Tibial artery (tissue), 4 donors: ENCODE measurements at regions of chr2 and their contacts with region 1.

Region 1: GRCh38 chr2:127526149-127527000 is at the start of gene IWS1:
- DNase-seq: peak; percentile 97
- H3K4me3 ChIP-seq: peak within 1 kb of the TSS; percentile 77 to 84
- H3K27ac ChIP-seq: peak within 1 kb of the TSS; percentile 91
- H3K4me1 ChIP-seq: peaks cover 0 to 23% (median 20%) of the 10 kb centered on the region in 4 donors
- H3K27me3 ChIP-seq: no peaks in the 10 kb centered on the region
- CTCF ChIP-seq: peak; percentile 48 to 73

Region 2: GRCh38 chr2:127471286-127471988 is 54.9 kb before region 1 on chr2:
- intact Hi-C with region 1: no loop called
- DNase-seq: no peak
- H3K4me3 ChIP-seq: no peak overlapping the region
- H3K27ac ChIP-seq: no peak overlapping the region
- H3K4me1 ChIP-seq: no peaks in the 10 kb centered on the region
- H3K27me3 ChIP-seq: no peaks in the 10 kb centered on the region
- CTCF ChIP-seq: no peak

Region 3: DNA sequence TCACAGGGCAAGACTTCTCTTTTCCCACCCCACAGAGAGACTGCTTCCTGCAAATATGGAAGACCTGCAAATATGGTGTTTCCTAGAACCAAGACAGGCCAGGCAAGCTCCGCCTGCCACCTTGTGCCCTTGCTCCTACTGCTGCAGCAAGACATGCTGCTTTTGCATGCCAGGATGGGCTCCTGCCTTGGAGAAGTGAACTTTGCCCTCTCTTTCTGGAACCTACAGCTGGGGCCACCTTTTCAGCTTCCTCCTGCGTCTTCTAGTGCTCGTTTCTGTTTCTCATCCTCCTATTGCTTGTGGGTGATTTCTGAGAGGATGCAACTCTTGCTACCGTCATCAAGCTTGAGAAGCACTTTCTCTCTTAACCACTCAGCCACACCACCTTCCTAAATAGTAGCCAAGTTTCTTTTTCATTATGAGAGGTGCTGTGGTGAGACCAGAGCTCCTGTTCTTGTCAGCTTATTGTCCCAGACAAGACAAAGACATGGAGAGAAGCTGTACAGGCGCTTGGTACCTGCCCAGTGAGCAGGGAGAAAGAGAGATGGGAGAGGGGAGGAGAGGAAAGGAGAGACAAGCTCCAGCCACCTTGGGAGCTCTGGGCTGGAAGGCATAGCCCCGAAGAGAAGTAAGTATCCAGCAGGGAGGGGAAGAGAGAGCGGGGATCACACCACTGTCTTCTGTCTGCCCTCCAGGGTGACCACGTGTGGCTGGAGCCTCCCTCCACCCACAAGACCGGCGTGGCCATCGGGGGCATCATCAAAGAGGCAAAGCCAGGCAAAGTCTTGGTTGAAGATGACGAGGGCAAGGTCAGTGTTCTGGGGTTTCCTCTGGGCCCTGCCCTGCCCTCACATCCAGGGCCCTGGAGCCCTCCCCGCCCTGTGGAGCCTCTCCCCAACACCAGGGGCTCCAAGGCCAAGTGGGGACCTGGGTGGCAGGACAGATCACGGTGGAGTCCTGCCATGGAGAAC is 37.4 kb after region 1 on chr2:
- intact Hi-C with region 1: no loop called
- DNase-seq: no peak
- H3K4me3 ChIP-seq: no peak overlapping the region
- H3K27ac ChIP-seq: no peak overlapping the region
- H3K4me1 ChIP-seq: peaks cover 0 to 27% (median 10%) of the 10 kb centered on the region in 4 donors
- H3K27me3 ChIP-seq: no peaks in the 10 kb centered on the region
- CTCF ChIP-seq: no peak

Region 4: DNA sequence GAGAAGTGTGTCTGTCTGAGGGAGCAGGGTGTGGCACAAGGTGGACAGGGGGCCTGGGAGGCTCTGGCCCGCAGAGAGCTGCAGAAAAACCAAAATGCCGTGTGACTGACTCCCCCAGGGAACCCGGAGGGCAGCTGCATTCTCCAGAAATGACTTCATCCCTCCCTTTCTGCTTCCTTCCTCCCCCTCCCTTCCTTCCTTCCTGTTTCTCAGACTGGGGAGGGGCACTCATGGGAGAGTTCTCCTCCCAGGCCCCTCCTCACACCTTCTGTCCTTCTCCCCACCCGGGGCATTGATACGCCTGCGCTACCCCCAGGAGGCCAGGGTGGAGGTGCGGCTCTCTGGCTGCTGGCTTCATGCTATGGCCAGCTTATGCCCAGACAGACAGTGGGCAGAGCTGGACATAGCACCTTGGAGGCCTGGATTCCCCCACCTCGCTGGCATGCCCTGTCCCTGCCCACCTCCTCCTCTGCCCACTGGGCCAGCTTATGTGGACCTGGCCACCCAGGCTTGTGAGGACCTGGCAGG is 111.4 kb after region 1 on chr2:
- intact Hi-C with region 1: loop called (anchors 5 kb)
- DNase-seq: no peak
- H3K4me3 ChIP-seq: no peak overlapping the region
- H3K27ac ChIP-seq: peak overlapping the region; percentile 72 to 81
- H3K4me1 ChIP-seq: peaks cover 0 to 48% (median 38%) of the 10 kb centered on the region in 4 donors
- H3K27me3 ChIP-seq: no peaks in the 10 kb centered on the region
- CTCF ChIP-seq: no peak

Region 5: DNA sequence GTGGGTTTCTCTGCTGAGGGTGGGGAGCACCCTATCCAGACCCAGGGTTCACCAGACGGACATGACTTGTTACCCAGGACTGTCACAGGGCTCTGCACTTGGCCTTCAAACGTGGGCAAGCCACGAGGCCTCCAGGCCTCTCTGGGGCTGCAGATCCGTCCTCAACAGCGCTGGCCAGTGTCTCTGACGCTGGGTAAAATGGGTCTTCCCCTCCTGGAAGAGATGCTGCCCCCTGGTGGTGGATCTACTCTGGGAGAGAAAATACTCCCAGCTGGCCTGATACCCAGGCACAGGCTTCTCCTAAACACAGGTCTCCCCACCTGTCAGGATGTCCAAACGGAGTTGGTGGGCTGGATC is 123.3 kb after region 1 on chr2:
- intact Hi-C with region 1: loop called (anchors 5 kb)
- DNase-seq: peak; percentile 89
- H3K4me3 ChIP-seq: peak overlapping the region in 1 of 2 donors; percentile 2
- H3K27ac ChIP-seq: peak overlapping the region; percentile 62 to 63
- H3K4me1 ChIP-seq: peaks cover 9 to 82% (median 58%) of the 10 kb centered on the region in 4 donors
- H3K27me3 ChIP-seq: no peaks in the 10 kb centered on the region
- CTCF ChIP-seq: peak; percentile 69 to 88

Region 6: GRCh38 chr2:127695491-127696472 is 169.4 kb after region 1 on chr2:
- intact Hi-C with region 1: loop called (anchors 5 kb)
- DNase-seq: peak; percentile 71 to 89
- H3K4me3 ChIP-seq: peak overlapping the region; percentile 41 to 44
- H3K27ac ChIP-seq: peak overlapping the region; percentile 62 to 87
- H3K4me1 ChIP-seq: peaks cover 0 to 24% (median 8%) of the 10 kb centered on the region in 4 donors
- H3K27me3 ChIP-seq: no peaks in the 10 kb centered on the region
- CTCF ChIP-seq: peak; percentile 51 to 54